BJ (cell line): ENCODE measurements at regions of chr1 and their contacts with region 1.

Region 1: GRCh38 chr1:151006327-151007052 is at the start of gene MINDY1:
- DNase-seq: peak; percentile 48
- H3K4me3 ChIP-seq: peak within 1 kb of the TSS; percentile 48
- H3K27me3 ChIP-seq: no peaks in the 10 kb centered on the region
- CTCF ChIP-seq: peak; percentile 75
- polyA plus RNA-seq, gene MINDY1: 9.7 and 13.0 TPM in 2 replicates

Region 2: GRCh38 chr1:150778409-150778808 is 228.1 kb before region 1 on chr1:
- CTCF ChIA-PET with region 1: no interaction called
- POLR2A ChIA-PET with region 1: interaction called, 14 read pairs
- DNase-seq: no peak
- H3K4me3 ChIP-seq: no peak overlapping the region
- H3K27me3 ChIP-seq: no peaks in the 10 kb centered on the region
- CTCF ChIP-seq: no peak

Region 3: GRCh38 chr1:150979092-150980056 is 27.1 kb before region 1 on chr1:
- CTCF ChIA-PET with region 1: interaction called, 32 read pairs
- POLR2A ChIA-PET with region 1: interaction called, 8 read pairs
- DNase-seq: peak; percentile 33
- H3K4me3 ChIP-seq: no peak overlapping the region
- H3K27me3 ChIP-seq: no peaks in the 10 kb centered on the region
- CTCF ChIP-seq: peak; percentile 100

Region 4: DNA sequence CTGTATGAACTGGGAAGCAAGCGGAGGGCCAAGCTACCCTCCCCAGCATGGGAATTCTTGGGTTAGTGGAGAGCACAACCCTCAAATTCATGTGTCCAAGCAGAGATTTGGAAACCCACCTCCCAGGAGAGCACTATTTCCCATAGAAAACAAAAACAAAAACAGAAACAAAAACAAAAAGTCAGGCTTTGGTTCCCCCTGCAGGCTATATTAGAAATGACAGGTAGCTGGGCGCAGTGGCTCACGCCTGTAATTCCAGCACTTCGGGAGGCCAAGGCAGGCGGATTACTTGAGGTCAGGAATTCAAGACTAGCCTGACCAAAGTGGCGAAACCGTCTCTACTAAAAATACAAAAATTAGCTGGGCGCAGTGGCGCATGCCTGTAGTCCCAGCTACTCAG is 10.6 kb before region 1 on chr1:
- CTCF ChIA-PET with region 1: interaction called, 64 read pairs
- POLR2A ChIA-PET with region 1: no interaction called
- DNase-seq: no peak
- H3K4me3 ChIP-seq: no peak overlapping the region
- H3K27me3 ChIP-seq: no peaks in the 10 kb centered on the region
- CTCF ChIP-seq: peak; percentile 64